Breast epithelium (tissue), 4 donors: ENCODE measurements at regions of chr10 and their contacts with region 1.

Region 1: GRCh38 chr10:66799474-66799873 is 126.4 kb upstream of the LRRTM3 start:
- DNase-seq: no peak
- H3K4me3 ChIP-seq: no peak overlapping the region
- H3K27ac ChIP-seq: no peak overlapping the region
- H3K4me1 ChIP-seq: no peaks in the 10 kb centered on the region
- H3K27me3 ChIP-seq: no peaks in the 10 kb centered on the region
- CTCF ChIP-seq: no peak
- POLR2A ChIP-seq: no peak

Region 2: DNA sequence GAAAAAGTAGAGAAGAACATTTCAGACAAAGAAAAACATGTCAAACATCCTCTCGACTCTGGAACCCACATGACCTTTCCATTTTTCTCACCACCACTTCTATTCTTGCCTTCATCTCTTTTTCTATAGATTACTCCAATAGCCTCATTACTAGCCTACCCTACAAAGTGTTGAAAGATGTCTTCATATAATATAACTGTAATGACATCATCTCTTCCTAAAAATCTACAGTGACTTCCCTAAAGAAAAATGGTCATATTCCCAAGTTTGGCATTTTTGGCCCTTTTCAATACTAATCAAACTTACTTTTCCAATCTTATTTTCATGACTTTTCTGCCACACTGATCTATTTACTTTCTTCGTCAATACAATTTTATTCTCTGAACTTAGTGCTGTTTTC is 176.9 kb after region 1 on chr10:
- intact Hi-C with region 1: loop called (anchors 5 kb)
- DNase-seq: no peak
- H3K4me3 ChIP-seq: no peak overlapping the region
- H3K27ac ChIP-seq: no peak overlapping the region
- H3K4me1 ChIP-seq: no peaks in the 10 kb centered on the region
- H3K27me3 ChIP-seq: no peaks in the 10 kb centered on the region
- CTCF ChIP-seq: no peak
- POLR2A ChIP-seq: no peak